Activated CD4-positive, alpha-beta memory T cell treated with anti-CD3 and anti-CD28 coated beads, Interleukin-2, amount 10 ng/mL, durations not matched to agents 7 days and 5 days (primary cell): ENCODE measurements at regions of chr2 and their contacts with region 1.

Region 1: GRCh38 chr2:208025037-208025813 is at the start of gene PLEKHM3:
- DNase-seq: peak; percentile 81
- H3K4me3 Mint-ChIP-seq: peak within 1 kb of the TSS; percentile 94
- H3K27ac Mint-ChIP-seq: peak within 1 kb of the TSS; percentile 81
- H3K4me1 Mint-ChIP-seq: peaks cover 21% of the 10 kb centered on the region
- H3K27me3 Mint-ChIP-seq: peaks cover 2% of the 10 kb centered on the region
- total RNA-seq, gene PLEKHM3: 4.9 to 5.4 TPM

Region 2: DNA sequence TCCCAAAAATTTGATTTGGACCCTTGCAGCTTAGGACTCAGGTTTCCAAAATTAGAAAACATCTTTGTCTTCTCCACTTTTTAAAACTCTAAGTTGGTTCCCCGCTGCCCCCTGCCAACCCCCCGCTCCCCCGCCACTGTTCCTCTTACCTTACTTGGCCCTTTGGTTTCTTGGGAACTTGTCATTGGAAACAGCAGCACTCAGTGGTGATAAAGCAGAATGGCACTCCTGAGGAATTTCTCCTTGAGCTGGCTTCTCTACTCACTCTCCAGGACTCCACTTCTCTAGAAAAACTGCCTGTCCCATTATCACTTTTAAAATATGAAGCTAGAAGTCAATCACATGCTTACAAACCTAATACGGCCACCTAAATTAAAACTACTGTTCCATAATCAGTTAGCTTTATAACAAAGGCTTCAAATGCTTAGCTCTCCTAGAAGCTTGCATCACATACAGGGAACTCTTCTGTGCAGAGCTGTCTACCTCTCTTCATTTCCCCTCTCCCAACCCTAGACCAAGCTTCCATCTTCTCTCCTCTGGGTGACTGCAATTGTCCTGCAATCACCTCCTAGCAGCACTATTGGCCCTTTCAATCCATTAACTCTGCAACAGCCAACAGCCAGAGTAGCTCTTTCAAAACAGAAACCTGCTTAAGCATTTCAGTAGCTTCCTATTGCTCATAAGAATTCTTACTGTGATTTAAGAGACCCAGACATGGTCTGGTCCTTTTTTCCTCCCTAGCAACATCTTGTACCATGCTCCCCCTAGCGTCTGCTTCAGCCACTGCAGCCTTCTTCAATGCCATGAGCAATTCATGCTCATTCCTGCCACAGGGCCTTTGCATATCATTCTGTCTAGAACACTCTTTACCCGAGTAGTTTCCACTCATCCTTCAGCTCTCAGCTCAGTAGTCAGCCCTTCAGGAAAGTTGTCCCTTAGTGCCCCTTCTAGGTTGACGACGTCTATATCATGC is 15.3 kb after region 1 on chr2:
- CTCF ChIA-PET with region 1: interaction called, 22 read pairs
- POLR2A ChIA-PET with region 1: interaction called, 7 read pairs
- DNase-seq: peak; percentile 77
- H3K4me3 Mint-ChIP-seq: no peak overlapping the region
- H3K27ac Mint-ChIP-seq: no peak overlapping the region
- H3K4me1 Mint-ChIP-seq: no peaks in the 10 kb centered on the region
- H3K27me3 Mint-ChIP-seq: peaks cover 10% of the 10 kb centered on the region

Region 3: DNA sequence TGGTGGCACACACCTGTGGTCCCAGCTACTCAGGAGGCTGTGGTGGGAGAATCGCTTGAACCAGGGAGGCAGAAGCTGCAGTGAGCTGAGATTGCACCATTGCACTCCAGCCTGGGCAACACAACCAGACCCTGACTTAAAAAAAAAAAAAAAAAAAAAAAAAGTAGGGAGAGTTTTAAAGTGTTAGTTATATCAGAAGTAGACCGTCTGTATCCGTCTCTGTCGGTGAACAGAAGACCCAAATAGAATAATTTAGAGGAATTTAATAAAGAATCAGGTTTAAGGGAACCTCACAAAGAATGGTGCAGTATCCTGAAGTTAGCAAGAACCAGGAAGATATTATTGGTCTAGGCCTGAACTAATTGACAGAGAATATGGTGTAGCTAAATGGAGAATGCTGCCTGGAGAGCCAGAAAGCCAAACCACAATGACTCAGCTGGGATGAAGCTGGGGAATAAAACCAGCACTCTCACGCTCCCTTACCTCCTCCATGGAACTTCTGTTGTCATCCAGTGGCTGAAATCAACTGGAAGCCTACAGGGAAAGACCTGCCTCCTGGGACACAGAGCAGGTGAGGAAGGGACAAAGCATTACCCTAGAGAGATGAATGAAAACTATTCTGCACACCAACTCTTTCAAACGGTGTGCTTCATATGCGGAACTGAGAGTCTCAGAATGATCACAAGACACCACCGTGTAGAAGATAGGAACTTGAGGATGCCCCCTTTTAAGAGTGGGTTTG is 39.2 kb after region 1 on chr2:
- CTCF ChIA-PET with region 1: no interaction called
- POLR2A ChIA-PET with region 1: no interaction called
- DNase-seq: no peak
- H3K4me3 Mint-ChIP-seq: no peak overlapping the region
- H3K27ac Mint-ChIP-seq: no peak overlapping the region
- H3K4me1 Mint-ChIP-seq: no peaks in the 10 kb centered on the region
- H3K27me3 Mint-ChIP-seq: peaks cover 9% of the 10 kb centered on the region

Region 4: GRCh38 chr2:208096080-208096479 is 70.9 kb after region 1 on chr2:
- CTCF ChIA-PET with region 1: no interaction called
- POLR2A ChIA-PET with region 1: no interaction called
- DNase-seq: no peak
- H3K4me3 Mint-ChIP-seq: no peak overlapping the region
- H3K27ac Mint-ChIP-seq: no peak overlapping the region
- H3K4me1 Mint-ChIP-seq: peaks cover 7% of the 10 kb centered on the region
- H3K27me3 Mint-ChIP-seq: peaks cover 6% of the 10 kb centered on the region